ENCODE measurements at regions of chr1 and their contacts with region 1.

Region 1: GRCh38 chr1:200075938-200076550 is 48.5 kb downstream of the NR5A2 start:
- DNase-seq: peak; percentile 100
- ATAC-seq: peak; percentile 96
- H3K4me3 ChIP-seq: peak overlapping the region; percentile 8; the same call in 1 of the 2 replicates
- H3K27ac ChIP-seq: no peak overlapping the region
- H3K4me1 ChIP-seq: peaks cover 14% of the 10 kb centered on the region
- H3K27me3 ChIP-seq: peaks cover 13% of the 10 kb centered on the region
- CTCF ChIP-seq: no peak

Region 2: DNA sequence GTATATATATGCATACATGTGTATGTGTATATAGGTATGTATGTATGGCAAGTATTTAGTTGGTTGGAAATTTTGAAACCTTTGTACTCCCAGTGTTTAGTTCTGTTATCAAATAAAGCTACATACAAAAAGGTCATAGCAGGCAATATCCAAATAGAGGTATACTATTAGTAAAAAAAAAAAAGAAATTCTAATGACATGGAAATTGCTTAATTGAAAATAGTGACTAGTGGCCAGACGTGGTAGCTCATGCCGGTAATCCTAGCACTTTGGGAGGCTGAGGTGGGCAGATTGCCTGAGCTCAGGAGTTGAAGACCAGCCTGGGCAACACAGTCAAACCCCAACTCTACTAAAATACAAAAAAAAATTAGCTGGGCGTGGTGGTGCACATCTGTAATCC is 400.1 kb before region 1 on chr1:
- CTCF ChIA-PET with region 1: no interaction called
- POLR2A ChIA-PET with region 1: interaction called, 12 read pairs
- intact Hi-C with region 1: no loop called
- DNase-seq: no peak
- ATAC-seq: no peak
- H3K4me3 ChIP-seq: no peak overlapping the region
- H3K27ac ChIP-seq: no peak overlapping the region
- H3K4me1 ChIP-seq: no peaks in the 10 kb centered on the region
- H3K27me3 ChIP-seq: no peaks in the 10 kb centered on the region
- CTCF ChIP-seq: no peak

Region 3: DNA sequence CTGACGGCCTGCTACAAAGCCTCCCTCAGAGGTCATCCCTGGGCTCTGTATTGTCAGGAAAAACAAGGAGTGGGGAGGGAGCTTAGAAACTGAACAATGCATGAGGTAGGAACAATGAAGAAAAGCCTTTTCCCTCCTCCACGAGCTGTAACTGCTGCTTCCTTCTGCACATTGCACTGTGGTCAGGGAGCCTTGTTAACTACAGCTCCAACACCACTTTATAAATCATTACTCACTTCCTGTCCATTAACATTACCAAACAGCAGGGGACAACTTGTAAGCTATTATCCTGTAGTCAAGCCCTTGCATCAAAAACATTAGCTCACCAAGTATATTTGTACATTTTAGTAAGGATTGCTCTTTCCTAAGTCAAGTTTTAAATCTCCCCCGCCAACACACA is 384.5 kb before region 1 on chr1:
- CTCF ChIA-PET with region 1: no interaction called
- POLR2A ChIA-PET with region 1: no interaction called
- intact Hi-C with region 1: loop called (anchors 10 kb)
- DNase-seq: peak; percentile 65
- ATAC-seq: peak; percentile 96
- H3K4me3 ChIP-seq: no peak overlapping the region
- H3K27ac ChIP-seq: no peak overlapping the region; the same call in 1 of the 2 replicates
- H3K4me1 ChIP-seq: peaks cover 8% of the 10 kb centered on the region
- H3K27me3 ChIP-seq: no peaks in the 10 kb centered on the region
- CTCF ChIP-seq: no peak

Region 4: GRCh38 chr1:199815947-199816346 is 260.1 kb before region 1 on chr1:
- CTCF ChIA-PET with region 1: no interaction called
- POLR2A ChIA-PET with region 1: no interaction called
- intact Hi-C with region 1: no loop called
- DNase-seq: no peak
- ATAC-seq: no peak
- H3K4me3 ChIP-seq: no peak overlapping the region
- H3K27ac ChIP-seq: no peak overlapping the region
- H3K4me1 ChIP-seq: no peaks in the 10 kb centered on the region
- H3K27me3 ChIP-seq: peaks cover 69% of the 10 kb centered on the region
- CTCF ChIP-seq: no peak

Region 5: GRCh38 chr1:199859491-199859933 is 216.5 kb before region 1 on chr1:
- CTCF ChIA-PET with region 1: no interaction called
- POLR2A ChIA-PET with region 1: no interaction called
- intact Hi-C with region 1: loop called (anchors 5 kb)
- DNase-seq: peak; percentile 98
- ATAC-seq: peak; percentile 97
- H3K4me3 ChIP-seq: no peak overlapping the region
- H3K27ac ChIP-seq: peak overlapping the region; percentile 3
- H3K4me1 ChIP-seq: peaks cover 24% of the 10 kb centered on the region
- H3K27me3 ChIP-seq: peaks cover 3% of the 10 kb centered on the region; the same call in 1 of the 2 replicates
- CTCF ChIP-seq: no peak

Region 6: GRCh38 chr1:200118779-200119505 is 42.9 kb after region 1 on chr1:
- CTCF ChIA-PET with region 1: interaction called, 10 read pairs
- POLR2A ChIA-PET with region 1: no interaction called
- intact Hi-C with region 1: no loop called
- DNase-seq: no peak
- ATAC-seq: peak; percentile 59
- H3K4me3 ChIP-seq: no peak overlapping the region
- H3K27ac ChIP-seq: no peak overlapping the region
- H3K4me1 ChIP-seq: no peaks in the 10 kb centered on the region
- H3K27me3 ChIP-seq: no peaks in the 10 kb centered on the region
- CTCF ChIP-seq: no peak

Measured in PC-3 (cell line).